A673 (cell line): ENCODE measurements at regions of chr17 and their contacts with region 1.

Region 1: DNA sequence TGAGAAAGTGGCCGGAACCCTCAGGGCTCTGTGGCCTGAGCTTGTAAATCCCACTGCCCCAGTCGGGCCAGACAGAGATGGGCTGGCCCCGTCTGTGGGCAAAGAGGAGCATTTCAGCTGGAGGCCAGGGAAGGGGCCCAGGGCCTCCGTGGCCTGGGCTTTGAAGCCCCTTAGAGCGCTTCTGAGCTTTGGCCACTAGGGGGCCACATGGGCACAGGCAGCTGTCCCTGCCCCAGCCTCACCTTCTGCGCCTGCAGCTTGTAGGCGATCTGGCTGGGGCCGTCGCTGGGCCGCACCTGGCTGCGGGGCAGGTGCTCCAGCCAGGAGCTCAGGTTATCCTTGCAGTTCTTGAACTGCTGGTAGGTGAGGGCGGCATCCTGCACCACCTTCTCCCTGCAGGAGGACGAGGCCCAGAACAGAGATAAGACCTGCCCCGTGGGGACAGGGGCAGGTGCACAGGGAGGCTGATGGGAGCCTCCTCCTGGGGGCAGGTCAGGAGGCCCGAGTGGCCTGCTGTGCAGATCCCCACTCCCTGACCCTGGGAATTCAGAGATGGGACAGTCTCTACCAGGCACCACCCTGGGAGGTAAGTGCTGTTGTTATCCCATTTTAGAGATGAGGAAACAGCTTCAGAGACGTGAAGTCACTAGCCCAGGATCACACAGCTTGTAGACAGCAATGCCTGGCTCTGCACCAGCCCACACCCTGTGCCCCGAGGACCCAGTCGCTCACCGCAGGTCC is 12.8 kb downstream of the EVPL start:
- DNase-seq: peak; percentile 81
- H3K4me3 ChIP-seq: peak overlapping the region; percentile 13
- H3K27ac ChIP-seq: no peak overlapping the region
- H3K4me1 ChIP-seq: peaks cover 4% of the 10 kb centered on the region
- H3K27me3 ChIP-seq: no peaks in the 10 kb centered on the region
- CTCF ChIP-seq: peak; percentile 98

Region 2: GRCh38 chr17:76072148-76072858 is 57.9 kb after region 1 on chr17 and contains the start of gene SRP68:
- CTCF ChIA-PET with region 1: interaction called, 7 read pairs
- POLR2A ChIA-PET with region 1: no interaction called
- intact Hi-C with region 1: loop called (anchors 10 kb)
- DNase-seq: peak; percentile 93
- H3K4me3 ChIP-seq: peak within 1 kb of the TSS; percentile 77
- H3K27ac ChIP-seq: peak within 1 kb of the TSS; percentile 88
- H3K4me1 ChIP-seq: peaks cover 18% of the 10 kb centered on the region
- H3K27me3 ChIP-seq: peaks cover 40% of the 10 kb centered on the region
- CTCF ChIP-seq: no peak
- total RNA-seq, gene SRP68: 96.4 and 101 TPM in 2 replicates